CD8-positive, alpha-beta T cell (primary cell): ENCODE measurements at regions of chr3 and their contacts with region 1.

Region 1: GRCh38 chr3:50550079-50550741 is 17.3 kb downstream of the C3orf18 start:
- DNase-seq: peak; percentile 43 to 75 (median 71)
- ATAC-seq: peak; percentile 89
- H3K4me3 ChIP-seq: no peak overlapping the region
- H3K4me3 Mint-ChIP-seq: no peak overlapping the region
- H3K27ac ChIP-seq: no peak overlapping the region
- H3K27ac Mint-ChIP-seq: no peak overlapping the region
- H3K4me1 ChIP-seq: no peaks in the 10 kb centered on the region
- H3K4me1 Mint-ChIP-seq: no peaks in the 10 kb centered on the region
- H3K27me3 ChIP-seq: no peaks in the 10 kb centered on the region
- H3K27me3 Mint-ChIP-seq: no peaks in the 10 kb centered on the region
- CTCF ChIP-seq: peak; percentile 82

Region 2: GRCh38 chr3:50388016-50388719 is 162.0 kb before region 1 on chr3:
- CTCF ChIA-PET with region 1: no interaction called
- POLR2A ChIA-PET with region 1: no interaction called
- intact Hi-C with region 1: no loop called
- DNase-seq: no peak
- ATAC-seq: peak; percentile 34
- H3K4me3 ChIP-seq: no peak overlapping the region
- H3K4me3 Mint-ChIP-seq: no peak overlapping the region
- H3K27ac ChIP-seq: no peak overlapping the region
- H3K27ac Mint-ChIP-seq: no peak overlapping the region
- H3K4me1 ChIP-seq: no peaks in the 10 kb centered on the region
- H3K4me1 Mint-ChIP-seq: no peaks in the 10 kb centered on the region
- H3K27me3 ChIP-seq: no peaks in the 10 kb centered on the region
- H3K27me3 Mint-ChIP-seq: no peaks in the 10 kb centered on the region
- CTCF ChIP-seq: no peak

Region 3: DNA sequence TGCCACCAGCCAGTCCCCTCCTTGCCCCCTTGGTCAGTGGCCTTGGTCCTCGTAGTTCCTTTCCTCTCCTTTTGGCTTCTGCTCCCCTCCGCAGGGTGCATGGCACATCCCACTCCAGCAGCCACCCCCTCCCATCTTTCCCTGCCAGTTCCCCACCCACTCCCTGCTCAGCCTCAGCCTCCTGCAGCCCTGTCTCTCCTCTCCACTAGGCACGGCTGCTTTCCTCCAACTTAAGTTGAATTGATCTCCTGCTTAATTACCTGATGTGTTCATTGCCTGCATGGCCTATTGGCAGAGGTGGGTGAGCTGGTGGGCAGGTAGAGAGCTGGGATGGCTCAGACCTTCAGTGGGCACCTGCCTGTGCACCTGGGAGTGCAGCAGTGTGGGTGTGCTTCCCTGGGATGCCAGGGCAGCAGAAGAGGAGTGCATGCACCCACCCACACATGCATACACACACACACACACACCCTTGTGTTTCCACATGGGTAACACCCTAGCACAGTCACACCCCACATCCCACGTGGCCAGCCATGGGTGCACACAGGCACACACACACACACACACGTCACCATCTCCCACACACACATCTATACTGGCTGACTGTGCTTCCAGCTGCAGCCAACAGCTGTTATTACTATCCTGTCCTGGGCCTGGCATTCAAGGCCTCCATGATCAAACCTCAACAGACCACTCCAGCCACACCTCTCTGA is 13.6 kb before region 1 on chr3:
- CTCF ChIA-PET with region 1: interaction called, 18 read pairs
- POLR2A ChIA-PET with region 1: no interaction called
- intact Hi-C with region 1: no loop called
- DNase-seq: no peak
- ATAC-seq: no peak
- H3K4me3 ChIP-seq: no peak overlapping the region
- H3K4me3 Mint-ChIP-seq: no peak overlapping the region
- H3K27ac ChIP-seq: no peak overlapping the region
- H3K27ac Mint-ChIP-seq: no peak overlapping the region
- H3K4me1 ChIP-seq: no peaks in the 10 kb centered on the region
- H3K4me1 Mint-ChIP-seq: no peaks in the 10 kb centered on the region
- H3K27me3 ChIP-seq: no peaks in the 10 kb centered on the region
- H3K27me3 Mint-ChIP-seq: peaks cover 21% of the 10 kb centered on the region
- CTCF ChIP-seq: no peak

Region 4: DNA sequence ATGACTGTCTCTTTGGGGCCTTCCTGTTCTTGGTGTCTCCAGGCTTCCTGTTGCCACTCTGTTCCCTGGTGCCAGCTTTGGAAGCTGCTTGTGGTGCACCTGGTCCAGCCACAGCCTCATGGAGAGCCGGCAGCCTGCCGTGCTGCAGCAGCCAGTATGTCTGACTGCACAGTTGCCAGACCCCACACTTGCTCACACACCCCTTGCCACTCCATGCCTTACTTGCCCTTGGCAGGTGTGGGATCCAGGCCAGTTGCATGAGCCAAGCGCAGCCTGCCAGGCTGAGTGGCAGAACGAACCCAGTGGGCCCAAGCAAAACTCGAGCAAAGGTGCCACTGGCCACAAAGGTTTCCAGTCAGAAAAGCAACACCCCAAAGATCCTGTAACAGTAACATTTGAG is 433.7 kb after region 1 on chr3:
- CTCF ChIA-PET with region 1: no interaction called
- POLR2A ChIA-PET with region 1: no interaction called
- intact Hi-C with region 1: no loop called
- DNase-seq: no peak
- ATAC-seq: no peak
- H3K4me3 ChIP-seq: no peak overlapping the region
- H3K4me3 Mint-ChIP-seq: no peak overlapping the region
- H3K27ac ChIP-seq: no peak overlapping the region
- H3K27ac Mint-ChIP-seq: no peak overlapping the region
- H3K4me1 ChIP-seq: no peaks in the 10 kb centered on the region
- H3K4me1 Mint-ChIP-seq: no peaks in the 10 kb centered on the region
- H3K27me3 ChIP-seq: no peaks in the 10 kb centered on the region
- H3K27me3 Mint-ChIP-seq: no peaks in the 10 kb centered on the region
- CTCF ChIP-seq: no peak